ENCODE measurements at regions of chr10 and their contacts with region 1.

Region 1: GRCh38 chr10:1074748-1075308 is 18.6 kb downstream of the WDR37 start:
- DNase-seq: peak in 1 of 2 experiments; percentile 37
- H3K4me3 ChIP-seq: no peak overlapping the region
- H3K27ac ChIP-seq: no peak overlapping the region
- H3K4me1 ChIP-seq: peaks cover 0 to 3% (median 0%) of the 10 kb centered on the region in 4 experiments; a peak in 1 of 7 replicates
- H3K27me3 ChIP-seq: no peaks in the 10 kb centered on the region
- CTCF ChIP-seq: peak in 2 of 3 experiments; percentile 18 to 35; a peak in 2 of 4 replicates
- EP300 ChIP-seq: no peak
- POLR2A ChIP-seq: no peak
- RAD21 ChIP-seq: peak; percentile 36 to 39; a peak in 3 of 4 replicates

Region 2: GRCh38 chr10:1054684-1055083 is 20.1 kb before region 1 on chr10:
- CTCF ChIA-PET with region 1: interaction called, 15 read pairs
- POLR2A ChIA-PET with region 1: interaction called, 3 read pairs
- DNase-seq: no peak
- H3K4me3 ChIP-seq: peak overlapping the region in 2 of 4 experiments; percentile 7 to 97; a peak in 3 of 8 replicates
- H3K27ac ChIP-seq: no peak overlapping the region
- H3K4me1 ChIP-seq: peaks cover 0 to 9% (median 3%) of the 10 kb centered on the region in 4 experiments; a peak in 3 of 7 replicates
- H3K27me3 ChIP-seq: no peaks in the 10 kb centered on the region
- CTCF ChIP-seq: no peak
- EP300 ChIP-seq: no peak
- POLR2A ChIP-seq: no peak
- RAD21 ChIP-seq: no peak

Region 3: GRCh38 chr10:1063232-1063865 is 11.5 kb before region 1 on chr10:
- CTCF ChIA-PET with region 1: interaction called, 13 read pairs
- POLR2A ChIA-PET with region 1: no interaction called
- DNase-seq: no peak
- H3K4me3 ChIP-seq: no peak overlapping the region
- H3K27ac ChIP-seq: no peak overlapping the region
- H3K4me1 ChIP-seq: no peaks in the 10 kb centered on the region
- H3K27me3 ChIP-seq: no peaks in the 10 kb centered on the region
- CTCF ChIP-seq: no peak
- EP300 ChIP-seq: no peak
- POLR2A ChIP-seq: no peak
- RAD21 ChIP-seq: no peak

Region 4: DNA sequence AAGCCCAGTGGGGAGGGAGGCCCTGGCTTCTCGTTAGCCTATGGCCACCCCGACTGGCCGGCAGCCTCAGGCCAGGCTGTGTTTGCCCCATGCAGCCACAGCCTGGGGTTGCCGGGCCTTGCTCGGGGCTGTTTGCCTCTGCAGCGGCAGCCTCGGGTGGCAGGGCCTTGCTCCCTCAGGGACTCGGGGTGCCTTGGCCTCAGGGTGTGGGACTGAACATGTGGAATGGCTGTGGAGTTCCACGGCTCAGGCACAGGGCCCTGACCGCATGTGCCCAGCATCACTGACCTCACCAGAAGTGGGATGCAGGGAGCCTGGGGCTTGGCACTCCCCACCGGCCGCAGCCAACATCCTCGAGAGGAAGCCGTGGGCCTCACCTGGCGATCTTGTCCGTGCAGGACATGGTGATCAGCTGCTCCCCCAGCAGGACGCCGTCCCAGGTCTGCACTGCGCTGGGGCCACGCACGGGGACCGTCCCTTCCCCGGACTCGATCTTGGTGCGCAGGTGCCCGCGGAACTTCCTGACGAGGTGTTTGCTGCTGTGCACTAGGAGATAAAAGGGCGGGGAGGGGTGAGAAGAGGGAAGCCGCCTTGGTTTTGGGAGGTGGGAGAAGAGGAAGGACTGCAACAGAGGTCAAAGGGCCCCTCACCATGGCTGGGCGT is 141.9 kb after region 1 on chr10:
- CTCF ChIA-PET with region 1: no interaction called
- POLR2A ChIA-PET with region 1: no interaction called
- DNase-seq: no peak
- H3K4me3 ChIP-seq: no peak overlapping the region
- H3K27ac ChIP-seq: no peak overlapping the region
- H3K4me1 ChIP-seq: no peaks in the 10 kb centered on the region
- H3K27me3 ChIP-seq: no peaks in the 10 kb centered on the region
- CTCF ChIP-seq: no peak
- EP300 ChIP-seq: no peak
- POLR2A ChIP-seq: no peak
- RAD21 ChIP-seq: no peak

Measured in H1 (cell line).